Caki2 (cell line): ENCODE measurements at regions of chr12 and their contacts with region 1.

Region 1: DNA sequence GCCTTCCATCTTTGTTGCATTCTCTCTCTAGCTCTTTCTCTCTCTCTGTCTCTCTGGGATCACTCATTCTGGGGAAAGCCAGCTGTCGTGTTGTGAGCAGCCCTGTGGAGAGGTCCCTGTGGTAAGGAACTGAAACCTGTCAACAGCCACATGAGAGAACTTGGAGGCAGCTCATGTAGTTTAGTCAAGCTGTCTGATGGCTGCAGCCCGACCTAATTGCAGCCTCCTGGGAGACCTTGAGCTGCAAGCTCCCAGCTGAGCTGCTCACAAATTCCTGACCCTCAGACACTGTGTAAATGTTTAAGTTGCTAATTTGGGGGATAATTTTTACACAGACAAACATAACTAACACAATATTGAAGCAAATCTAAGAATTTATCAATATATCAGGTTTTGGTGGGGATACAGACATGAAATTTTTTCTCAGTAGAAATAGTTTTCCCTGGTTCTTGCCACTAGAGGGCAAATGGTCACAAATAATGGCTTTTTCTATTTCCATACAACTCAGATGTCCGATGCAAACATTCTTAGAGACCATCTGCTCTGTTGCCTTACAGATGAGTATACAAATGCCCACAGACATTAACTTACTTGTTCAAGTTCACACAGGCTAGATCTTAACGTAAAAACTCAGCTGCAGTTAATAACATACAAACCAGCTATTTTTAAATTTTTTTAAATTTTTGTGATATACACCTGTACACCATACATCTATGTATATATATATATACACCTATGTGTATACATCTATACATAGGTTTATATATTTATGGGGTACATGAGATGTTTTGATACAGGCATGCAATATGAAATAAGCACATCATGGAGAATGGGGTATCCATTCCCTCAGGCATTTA is 15.5 kb upstream of the KRR1 start:
- DNase-seq: peak; percentile 56

Region 2: GRCh38 chr12:76031537-76032073 is 504.7 kb after region 1 on chr12 and contains the start of gene PHLDA1:
- in situ Hi-C with region 1: loop called (anchors 25 kb)
- DNase-seq: peak; percentile 100
- total RNA-seq, gene PHLDA1: 18.8 and 36.5 TPM in 2 replicates